K562 (cell line): ENCODE measurements at regions of chr11 and their contacts with region 1.

Region 1: DNA sequence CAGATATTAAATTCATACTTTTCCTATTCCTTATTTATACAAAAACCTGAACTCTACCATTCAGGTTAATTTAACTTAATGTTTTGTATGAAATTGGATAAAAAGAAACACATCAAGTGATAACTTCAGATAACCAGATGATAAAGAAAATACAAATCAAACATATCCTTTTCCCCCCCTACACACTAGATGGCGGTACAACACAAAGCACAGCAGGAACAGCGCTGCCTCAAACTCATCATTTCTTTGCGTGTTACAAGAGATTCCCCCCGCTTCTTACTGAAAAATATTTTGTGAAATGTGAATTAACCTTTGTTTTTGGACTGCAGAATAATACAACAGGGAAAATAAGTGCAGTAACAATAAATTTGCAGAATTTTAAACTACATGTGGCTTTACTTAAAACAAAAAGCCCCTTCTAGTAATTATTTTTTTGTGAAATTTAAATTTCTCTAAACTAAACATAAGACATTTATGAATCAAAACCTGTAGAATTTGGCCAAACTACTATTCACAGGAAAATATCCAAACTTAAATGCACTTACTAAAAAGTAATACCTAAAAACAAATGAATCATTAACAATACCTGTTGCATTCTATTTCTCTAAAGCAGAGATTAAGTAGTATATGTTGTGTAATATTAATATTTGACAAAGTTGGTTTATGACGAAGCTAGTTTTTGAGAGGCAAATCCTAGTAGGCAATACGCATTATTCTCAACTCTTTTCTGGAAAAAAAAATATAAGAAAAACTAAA is 74.4 kb downstream of the ARHGAP32 start:
- DNase-seq: peak; percentile 13 to 54 (median 24)
- ATAC-seq: no peak
- H3K4me3 ChIP-seq: no peak overlapping the region
- H3K27ac ChIP-seq: no peak overlapping the region
- H3K4me1 ChIP-seq: no peaks in the 10 kb centered on the region
- H3K27me3 ChIP-seq: no peaks in the 10 kb centered on the region
- CTCF ChIP-seq: peak; percentile 62 to 66 (median 63)
- EP300 ChIP-seq: no peak
- POLR2A ChIP-seq: no peak
- RAD21 ChIP-seq: peak; percentile 73 to 75

Region 2: DNA sequence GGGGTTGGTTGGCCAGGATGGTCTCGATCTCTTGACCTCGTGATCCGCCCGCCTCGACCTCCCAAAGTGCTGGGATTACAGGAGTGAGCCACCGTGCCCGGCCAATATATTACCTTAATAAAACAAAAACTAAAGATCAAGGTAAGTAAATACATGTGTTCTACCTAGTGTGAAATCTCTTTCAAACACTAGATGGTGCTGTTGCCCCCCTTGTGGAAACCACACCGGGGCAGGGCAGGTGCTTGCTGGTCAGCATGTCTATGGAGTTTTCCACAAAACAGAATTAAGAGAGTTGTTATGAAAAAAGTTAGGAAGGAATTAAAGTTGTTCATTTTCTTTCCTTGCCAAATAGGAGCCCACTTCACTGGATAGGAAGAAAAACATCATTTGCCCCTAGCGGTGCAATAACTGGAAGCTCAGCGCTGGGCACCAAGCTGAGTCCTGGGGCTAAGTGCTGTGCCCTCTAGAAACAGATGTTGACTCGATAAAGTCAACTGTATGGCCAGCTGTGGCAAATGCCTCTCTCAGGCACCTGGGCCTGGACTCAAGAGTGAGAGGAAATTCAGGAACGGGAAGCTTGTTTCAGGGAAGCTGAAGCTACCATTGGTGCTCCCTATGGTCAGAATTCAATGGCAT is 233.0 kb before region 1 on chr11:
- CTCF ChIA-PET with region 1: no interaction called
- POLR2A ChIA-PET with region 1: no interaction called
- in situ Hi-C with region 1: no loop called
- intact Hi-C with region 1: loop called (anchors 10 kb)
- DNase-seq: peak; percentile 61 to 70 (median 67)
- ATAC-seq: peak; percentile 96
- H3K4me3 ChIP-seq: no peak overlapping the region
- H3K27ac ChIP-seq: no peak overlapping the region
- H3K4me1 ChIP-seq: no peaks in the 10 kb centered on the region
- H3K27me3 ChIP-seq: peaks cover 0 to 11% of the 10 kb centered on the region in 2 experiments; a peak in 2 of 5 replicates
- CTCF ChIP-seq: peak; percentile 71 to 81 (median 81)
- EP300 ChIP-seq: no peak
- POLR2A ChIP-seq: no peak
- RAD21 ChIP-seq: peak; percentile 85 to 87

Region 3: GRCh38 chr11:129331871-129332274 is 214.1 kb after region 1 on chr11:
- CTCF ChIA-PET with region 1: interaction called, 6 read pairs
- POLR2A ChIA-PET with region 1: no interaction called
- in situ Hi-C with region 1: no loop called
- intact Hi-C with region 1: loop called (anchors 1 kb)
- DNase-seq: peak; percentile 30 to 54 (median 43)
- ATAC-seq: peak; percentile 93
- H3K4me3 ChIP-seq: no peak overlapping the region
- H3K27ac ChIP-seq: no peak overlapping the region
- H3K4me1 ChIP-seq: no peaks in the 10 kb centered on the region
- H3K27me3 ChIP-seq: no peaks in the 10 kb centered on the region
- CTCF ChIP-seq: peak; percentile 58 to 76 (median 73)
- EP300 ChIP-seq: no peak
- POLR2A ChIP-seq: no peak
- RAD21 ChIP-seq: peak; percentile 24 to 61

Region 4: DNA sequence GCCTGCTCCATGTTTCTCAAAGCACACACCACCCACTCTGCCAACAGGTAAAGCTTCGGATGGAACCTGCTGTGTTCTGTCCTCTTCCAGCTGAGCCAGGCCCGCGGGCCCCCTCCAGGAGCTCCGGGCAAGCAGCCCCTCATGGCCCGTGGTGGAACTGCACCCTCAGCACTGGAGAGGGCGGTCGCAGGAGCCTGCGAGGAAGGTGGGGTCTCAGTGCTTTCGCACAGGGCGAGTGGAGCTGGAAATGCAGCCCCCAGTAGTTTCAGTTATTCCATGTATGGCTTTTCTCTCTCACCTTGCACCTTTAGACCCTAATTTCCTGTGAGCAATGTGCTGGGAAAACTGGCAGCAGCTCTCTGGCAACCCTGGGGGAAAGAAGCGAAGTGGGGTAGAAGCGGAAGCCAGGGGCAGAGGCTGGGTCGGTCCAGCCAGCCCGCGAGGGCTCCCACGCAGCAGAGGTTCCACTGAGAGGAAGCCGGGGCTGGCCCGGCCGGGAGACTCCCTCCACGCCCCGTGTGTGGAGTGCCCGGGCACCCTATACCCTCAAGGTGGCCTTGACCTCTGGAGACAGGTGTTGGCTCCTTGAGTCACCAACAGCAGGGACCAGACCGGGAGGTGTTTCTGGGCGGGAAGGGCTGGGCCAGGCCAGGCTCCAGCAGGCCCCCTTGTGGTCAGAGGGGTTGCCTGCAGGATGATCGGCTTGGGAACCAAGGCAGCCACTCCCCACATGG is 578.0 kb after region 1 on chr11:
- CTCF ChIA-PET with region 1: no interaction called
- POLR2A ChIA-PET with region 1: no interaction called
- in situ Hi-C with region 1: no loop called
- intact Hi-C with region 1: loop called (anchors 2 kb)
- DNase-seq: peak; percentile 67 to 72 (median 70)
- ATAC-seq: peak; percentile 96
- H3K4me3 ChIP-seq: no peak overlapping the region
- H3K27ac ChIP-seq: no peak overlapping the region
- H3K4me1 ChIP-seq: peaks cover 0 to 9% of the 10 kb centered on the region in 2 experiments; a peak in 3 of 5 replicates
- H3K27me3 ChIP-seq: peaks cover 0 to 18% of the 10 kb centered on the region in 2 experiments; a peak in 2 of 5 replicates
- CTCF ChIP-seq: peak; percentile 71 to 83 (median 81)
- EP300 ChIP-seq: no peak
- POLR2A ChIP-seq: no peak
- RAD21 ChIP-seq: peak; percentile 45 to 70